ENCODE measurements at regions of chr6 and their contacts with region 1.

Region 1: GRCh38 chr6:139146317-139146726 is 11.4 kb downstream of the HECA start:
- DNase-seq: no peak
- H3K4me3 ChIP-seq: peak overlapping the region; percentile 23
- H3K4me3 Mint-ChIP-seq: peak overlapping the region; percentile 60 to 81 (median 71)
- H3K27ac ChIP-seq: no peak overlapping the region
- H3K27ac Mint-ChIP-seq: peak overlapping the region; percentile 51 to 89 (median 82)
- H3K4me1 ChIP-seq: peaks cover 95% of the 10 kb centered on the region
- H3K4me1 Mint-ChIP-seq: peaks cover 92 to 97% (median 97%) of the 10 kb centered on the region in 3 donors
- H3K27me3 ChIP-seq: no peaks in the 10 kb centered on the region
- H3K27me3 Mint-ChIP-seq: peaks cover 0 to 2% of the 10 kb centered on the region in 2 donors

Region 2: DNA sequence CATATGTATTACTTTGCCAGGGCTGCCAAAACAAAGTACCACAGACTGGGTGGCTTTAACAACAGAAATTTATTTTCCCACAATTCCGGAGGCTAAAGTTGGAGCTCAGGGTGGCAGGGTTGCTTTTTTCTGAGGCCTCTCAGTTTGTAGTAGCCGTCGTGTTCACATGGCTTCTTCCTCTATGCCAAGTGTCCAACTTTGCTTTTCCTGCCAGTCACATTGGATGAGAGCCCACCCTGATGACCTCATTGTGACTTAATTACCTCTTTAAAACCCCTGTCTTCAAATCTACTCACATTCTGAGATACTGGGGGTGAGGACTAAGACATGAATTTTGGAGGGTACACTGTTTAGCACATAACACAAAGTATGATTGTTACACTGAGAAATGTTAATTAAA is 360.3 kb before region 1 on chr6:
- CTCF ChIA-PET with region 1: no interaction called
- POLR2A ChIA-PET with region 1: no interaction called
- DNase-seq: no peak
- H3K4me3 ChIP-seq: no peak overlapping the region
- H3K4me3 Mint-ChIP-seq: no peak overlapping the region
- H3K27ac ChIP-seq: no peak overlapping the region
- H3K27ac Mint-ChIP-seq: no peak overlapping the region
- H3K4me1 ChIP-seq: no peaks in the 10 kb centered on the region
- H3K4me1 Mint-ChIP-seq: peaks cover 7 to 12% (median 12%) of the 10 kb centered on the region in 3 donors
- H3K27me3 ChIP-seq: no peaks in the 10 kb centered on the region
- H3K27me3 Mint-ChIP-seq: peaks cover 0 to 1% of the 10 kb centered on the region in 2 donors

Region 3: DNA sequence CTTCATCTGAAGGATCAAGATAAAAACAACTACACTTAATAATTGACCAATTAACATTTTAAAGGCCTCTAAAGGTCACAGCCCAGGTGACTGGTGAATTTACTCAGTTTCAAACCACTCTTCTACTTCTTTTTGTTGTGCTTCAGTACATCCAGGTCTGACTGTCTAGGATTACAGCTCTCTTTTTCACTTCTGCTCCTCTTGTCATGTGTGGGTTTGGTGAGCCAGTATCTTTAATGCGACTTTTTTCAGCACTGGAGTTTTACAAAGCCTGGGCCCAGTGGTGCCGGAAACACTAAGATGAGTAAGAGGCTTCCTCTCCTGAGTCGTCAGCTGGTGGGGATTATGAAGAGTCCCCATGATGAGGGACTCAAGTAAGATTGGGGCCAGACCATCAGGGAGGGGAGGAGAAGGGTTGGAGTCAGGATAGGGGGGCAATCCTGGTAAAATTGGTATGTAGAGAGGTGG is 15.5 kb after region 1 on chr6:
- CTCF ChIA-PET with region 1: interaction called, 15 read pairs
- POLR2A ChIA-PET with region 1: interaction called, 6 read pairs
- DNase-seq: peak; percentile 30 to 78 (median 59)
- H3K4me3 ChIP-seq: peak overlapping the region; percentile 27
- H3K4me3 Mint-ChIP-seq: peak overlapping the region; percentile 66 to 86 (median 81)
- H3K27ac ChIP-seq: peak overlapping the region; percentile 4
- H3K27ac Mint-ChIP-seq: peak overlapping the region; percentile 83 to 98 (median 92)
- H3K4me1 ChIP-seq: peaks cover 87% of the 10 kb centered on the region
- H3K4me1 Mint-ChIP-seq: peaks cover 88 to 94% (median 90%) of the 10 kb centered on the region in 3 donors
- H3K27me3 ChIP-seq: no peaks in the 10 kb centered on the region
- H3K27me3 Mint-ChIP-seq: peaks cover 0 to 1% of the 10 kb centered on the region in 2 donors